ENCODE measurements at regions of chr3 and their contacts with region 1.

Region 1: GRCh38 chr3:124540550-124541211 is 189.6 kb upstream of the UMPS start:
- DNase-seq: no peak
- H3K4me3 ChIP-seq: no peak overlapping the region
- H3K27ac ChIP-seq: no peak overlapping the region
- H3K4me1 ChIP-seq: no peaks in the 10 kb centered on the region
- H3K27me3 ChIP-seq: no peaks in the 10 kb centered on the region
- CTCF ChIP-seq: no peak
- POLR2A ChIP-seq: no peak

Region 2: GRCh38 chr3:126040386-126040785 is 1499.7 kb after region 1 on chr3:
- intact Hi-C with region 1: loop called (anchors 10 kb)
- DNase-seq: no peak
- H3K4me3 ChIP-seq: no peak overlapping the region
- H3K27ac ChIP-seq: no peak overlapping the region
- H3K4me1 ChIP-seq: no peaks in the 10 kb centered on the region
- H3K27me3 ChIP-seq: no peaks in the 10 kb centered on the region
- CTCF ChIP-seq: no peak
- POLR2A ChIP-seq: no peak